ENCODE measurements at regions of chr13 and their contacts with region 1.

Region 1: DNA sequence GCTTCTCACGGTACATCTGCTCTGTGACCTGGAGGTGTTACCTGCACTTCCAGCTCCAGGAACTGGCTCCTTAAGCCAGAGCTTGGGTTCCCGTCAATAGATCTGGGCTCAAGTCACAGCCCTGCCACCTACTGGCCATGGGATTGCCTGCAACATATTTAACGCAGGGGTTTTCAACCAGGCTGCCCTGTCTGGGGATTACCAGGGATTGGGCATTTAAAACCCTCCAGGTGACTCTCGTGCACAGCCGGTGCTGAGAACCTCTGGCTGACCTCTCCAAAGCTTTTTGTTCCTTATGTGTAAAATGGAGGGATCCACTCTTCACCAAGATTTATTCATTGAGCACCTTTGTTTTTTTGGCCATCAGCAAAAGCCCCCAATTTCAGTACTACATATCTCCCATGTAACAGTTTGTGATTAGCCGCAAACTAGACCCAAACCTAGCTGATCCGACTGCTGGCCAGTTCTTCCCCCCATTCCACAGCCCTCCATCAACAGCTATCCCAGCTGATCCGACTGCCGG is 76.6 kb upstream of the STK24 start:
- DNase-seq: peak; percentile 66
- H3K4me3 Mint-ChIP-seq: no peak overlapping the region
- H3K27ac Mint-ChIP-seq: no peak overlapping the region
- H3K4me1 Mint-ChIP-seq: peaks cover 15% of the 10 kb centered on the region
- H3K27me3 Mint-ChIP-seq: no peaks in the 10 kb centered on the region
- CTCF ChIP-seq: peak; percentile 38

Region 2: DNA sequence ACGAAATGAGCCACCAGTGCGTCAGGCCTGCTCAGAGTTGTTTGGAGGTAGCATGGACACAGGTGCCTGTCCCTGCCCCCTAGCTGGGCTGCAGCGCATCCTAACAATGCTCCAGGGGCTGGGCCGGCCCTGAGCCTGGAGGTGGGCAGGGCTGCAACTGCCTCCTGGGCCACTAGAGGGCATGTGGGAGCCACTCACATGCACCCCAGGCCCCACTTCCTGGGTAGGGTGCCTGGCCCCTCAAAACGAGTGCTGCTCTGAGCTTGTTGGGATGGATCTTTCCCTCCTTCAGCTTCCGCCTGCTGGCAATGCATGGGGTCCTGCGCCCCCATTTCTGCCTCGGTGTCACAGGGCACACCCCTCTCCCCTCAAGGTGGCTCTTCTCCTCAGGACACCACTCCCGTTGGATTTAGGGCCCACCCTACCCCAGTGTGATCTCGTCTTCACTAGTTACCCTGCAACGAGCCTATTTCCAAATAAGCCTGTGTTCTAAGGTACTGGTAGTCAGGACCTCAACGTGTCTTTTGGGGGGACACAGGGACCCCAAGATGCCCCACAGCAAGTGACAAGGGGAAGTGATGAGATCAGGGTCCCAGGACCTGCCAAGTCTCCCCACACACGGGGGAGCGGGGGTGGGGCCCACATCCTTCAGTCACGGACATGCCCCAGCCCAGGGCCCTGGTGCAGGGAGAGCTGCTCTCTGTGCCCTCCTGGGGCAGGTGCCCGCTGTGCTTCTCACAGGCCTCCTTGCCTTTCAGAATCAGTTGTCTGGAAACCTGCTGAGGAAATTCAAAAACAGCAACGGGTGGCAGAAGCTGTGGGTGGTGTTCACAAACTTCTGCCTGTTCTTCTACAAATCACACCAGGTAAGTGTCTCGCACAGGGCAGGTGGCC is 207.9 kb before region 1 on chr13:
- CTCF ChIA-PET with region 1: interaction called, 4 read pairs
- intact Hi-C with region 1: loop called (anchors 1 kb)
- DNase-seq: peak; percentile 58
- H3K4me3 Mint-ChIP-seq: no peak overlapping the region
- H3K27ac Mint-ChIP-seq: no peak overlapping the region
- H3K4me1 Mint-ChIP-seq: no peaks in the 10 kb centered on the region
- H3K27me3 Mint-ChIP-seq: no peaks in the 10 kb centered on the region
- CTCF ChIP-seq: peak; percentile 42

Region 3: GRCh38 chr13:98484289-98485219 is 169.0 kb before region 1 on chr13:
- CTCF ChIA-PET with region 1: interaction called, 3 read pairs
- intact Hi-C with region 1: loop called (anchors 5 kb)
- DNase-seq: peak; percentile 77
- H3K4me3 Mint-ChIP-seq: peak overlapping the region; percentile 67
- H3K27ac Mint-ChIP-seq: peak overlapping the region; percentile 98
- H3K4me1 Mint-ChIP-seq: peaks cover 9% of the 10 kb centered on the region
- H3K27me3 Mint-ChIP-seq: no peaks in the 10 kb centered on the region
- CTCF ChIP-seq: no peak

Region 4: GRCh38 chr13:98570929-98571372 is 82.6 kb before region 1 on chr13:
- CTCF ChIA-PET with region 1: interaction called, 3 read pairs
- intact Hi-C with region 1: loop called (anchors 5 kb)
- DNase-seq: peak; percentile 18
- H3K4me3 Mint-ChIP-seq: peak overlapping the region; percentile 58
- H3K27ac Mint-ChIP-seq: no peak overlapping the region
- H3K4me1 Mint-ChIP-seq: peaks cover 17% of the 10 kb centered on the region
- H3K27me3 Mint-ChIP-seq: no peaks in the 10 kb centered on the region
- CTCF ChIP-seq: no peak

Measured in Calu3 (cell line).